Dorsolateral prefrontal cortex (tissue), 120 donors: ENCODE measurements at regions of chr14 and their contacts with region 1.

Region 1: DNA sequence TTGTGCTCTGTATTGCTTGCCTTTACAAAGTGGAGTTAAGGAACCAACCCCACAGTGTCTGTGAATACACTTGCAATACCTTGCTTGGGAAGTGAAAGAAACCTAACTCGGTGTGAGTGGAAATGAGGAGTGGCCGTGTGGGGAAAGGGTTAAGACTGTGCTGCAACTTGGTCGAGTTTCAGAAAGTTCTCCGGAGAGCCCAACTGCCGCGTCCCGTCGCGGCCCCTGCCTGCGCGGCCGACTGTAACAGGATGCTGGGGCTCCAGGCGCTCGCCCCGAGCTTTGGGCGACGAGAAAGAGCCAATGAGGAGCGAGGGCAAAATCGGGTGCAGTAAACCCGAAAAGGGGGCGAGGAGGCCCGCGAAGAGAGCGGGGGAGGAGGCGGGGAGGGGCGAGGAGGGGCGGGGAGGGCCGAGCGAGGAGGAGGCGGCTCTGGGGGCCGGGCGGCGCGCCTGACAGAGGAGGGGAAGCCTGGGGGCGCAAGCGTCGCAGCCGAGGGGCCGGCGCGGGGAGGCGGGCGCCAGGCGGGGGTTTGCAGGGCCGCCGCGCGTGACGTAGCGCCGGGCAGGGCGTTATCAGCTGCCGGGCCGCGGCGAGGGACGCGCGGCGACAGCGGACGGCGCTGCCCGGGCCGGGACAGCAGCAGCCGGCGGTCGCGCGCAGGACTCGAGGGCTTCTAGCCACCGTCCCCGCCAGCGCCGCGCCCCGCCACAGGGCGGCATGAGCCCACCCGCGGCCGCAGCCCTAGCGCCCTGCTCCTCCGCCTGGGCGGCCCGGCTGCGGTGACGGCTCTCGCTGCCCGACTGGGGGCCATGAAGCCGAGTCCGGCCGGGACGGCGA is at the start of gene DACT1:
- DNase-seq: peak in 8 of 10 donors; percentile 40 to 74 (median 61)
- H3K4me3 ChIP-seq: peak within 1 kb of the TSS; percentile 57 to 98 (median 80)
- H3K27ac ChIP-seq: peak within 1 kb of the TSS; percentile 15 to 96 (median 87)
- H3K27me3 ChIP-seq: no peaks in the 10 kb centered on the region
- CTCF ChIP-seq: peak in 8 of 56 donors; percentile 5 to 35 (median 22)
- total RNA-seq, gene DACT1: 5.1 to 16.0 (median 9.1) TPM

Region 2: GRCh38 chr14:58244556-58245387 is 392.8 kb before region 1 on chr14 and contains the start of gene PSMA3:
- intact Hi-C with region 1: loop called in 1 of 2 experiments (anchors 5 kb)
- DNase-seq: peak; percentile 92 to 98 (median 96)
- H3K4me3 ChIP-seq: peak within 1 kb of the TSS; percentile 63 to 99 (median 90)
- H3K27ac ChIP-seq: peak within 1 kb of the TSS; percentile 74 to 98 (median 93)
- H3K27me3 ChIP-seq: no peaks in the 10 kb centered on the region
- CTCF ChIP-seq: peak in 44 of 56 donors; percentile 5 to 64 (median 35)
- total RNA-seq, gene PSMA3: 45.6 to 146 (median 80.0) TPM

Region 3: DNA sequence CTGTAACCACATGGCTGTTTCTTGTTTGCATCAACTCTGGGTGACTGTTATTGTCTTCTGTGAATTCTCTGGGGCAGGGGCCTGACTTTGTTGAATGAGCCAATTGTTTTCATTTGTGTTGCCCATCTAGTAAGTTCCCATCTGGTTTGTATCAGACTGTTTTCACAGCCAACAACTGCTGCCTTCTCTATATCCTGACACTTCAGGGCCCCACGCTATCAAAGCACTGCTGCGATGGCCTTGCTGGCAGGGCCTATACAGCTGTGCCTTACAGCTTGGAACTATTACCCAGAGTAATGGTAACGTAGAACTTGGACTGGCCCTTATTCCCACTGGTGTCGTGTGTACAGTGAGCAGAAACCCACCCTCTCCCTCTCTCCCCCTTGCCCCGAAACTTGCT is 104.2 kb before region 1 on chr14:
- intact Hi-C with region 1: loop called in 1 of 2 experiments (anchors 2 kb)
- DNase-seq: peak in 8 of 10 donors; percentile 11 to 73 (median 58)
- H3K4me3 ChIP-seq: peak overlapping the region in 6 of 59 donors; percentile 1 to 38 (median 12)
- H3K27ac ChIP-seq: peak overlapping the region in 56 of 59 donors; percentile 3 to 87 (median 70)
- H3K27me3 ChIP-seq: no peaks in the 10 kb centered on the region
- CTCF ChIP-seq: peak in 4 of 56 donors; percentile 11 to 30 (median 24)

Region 4: GRCh38 chr14:58587271-58587670 is 50.3 kb before region 1 on chr14:
- intact Hi-C with region 1: no loop called
- DNase-seq: no peak
- H3K4me3 ChIP-seq: no peak overlapping the region
- H3K27ac ChIP-seq: no peak overlapping the region
- H3K27me3 ChIP-seq: no peaks in the 10 kb centered on the region
- CTCF ChIP-seq: no peak

Region 5: GRCh38 chr14:58738189-58738836 is 100.7 kb after region 1 on chr14:
- intact Hi-C with region 1: no loop called
- DNase-seq: no peak
- H3K4me3 ChIP-seq: no peak overlapping the region
- H3K27ac ChIP-seq: no peak overlapping the region
- H3K27me3 ChIP-seq: peaks cover 0 to 3% (median 0%) of the 10 kb centered on the region in 45 donors
- CTCF ChIP-seq: no peak

Region 6: GRCh38 chr14:58826845-58827686 is 189.5 kb after region 1 on chr14:
- intact Hi-C with region 1: loop called in 1 of 2 experiments (anchors 2 kb)
- DNase-seq: no peak
- H3K4me3 ChIP-seq: no peak overlapping the region
- H3K27ac ChIP-seq: no peak overlapping the region
- H3K27me3 ChIP-seq: no peaks in the 10 kb centered on the region
- CTCF ChIP-seq: peak in 33 of 56 donors; percentile 3 to 52 (median 24)

Region 7: DNA sequence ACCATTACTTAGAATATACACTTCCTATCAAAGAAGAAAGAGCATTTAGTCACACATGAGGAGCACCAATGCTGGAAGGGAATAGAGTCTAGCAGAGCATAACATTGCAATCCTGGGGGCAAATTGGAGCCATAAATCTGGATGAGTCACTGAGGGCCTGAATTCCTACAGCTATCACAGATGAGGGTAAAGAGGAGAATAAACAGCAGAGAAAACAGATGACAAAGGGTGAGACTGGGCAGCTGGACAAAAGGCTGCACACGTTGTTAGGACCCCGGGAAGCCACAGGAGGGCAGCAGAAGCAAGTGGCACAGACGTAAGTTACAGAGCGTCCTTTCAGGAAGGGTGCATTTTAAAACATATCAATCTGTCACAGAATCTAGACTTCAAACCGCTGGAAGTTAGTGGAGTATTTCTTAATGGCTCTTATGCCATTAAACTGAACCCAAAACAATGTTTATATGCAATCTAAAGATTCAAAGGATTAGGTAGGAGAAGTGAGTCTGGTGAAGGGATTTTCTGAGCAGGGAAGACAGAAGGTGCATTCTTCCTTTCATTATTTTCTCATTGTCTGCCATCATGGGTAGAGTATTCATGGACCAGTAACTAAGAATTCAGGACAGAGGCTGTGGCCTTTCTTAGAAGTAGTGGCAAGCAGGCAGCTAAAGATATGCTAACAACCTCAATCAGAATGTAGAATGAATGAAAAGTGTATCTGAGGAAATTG is 391.0 kb after region 1 on chr14:
- intact Hi-C with region 1: loop called (anchors 10 kb)
- DNase-seq: peak in 9 of 10 donors; percentile 30 to 70 (median 45)
- H3K4me3 ChIP-seq: peak overlapping the region in 1 of 59 donors; percentile 24
- H3K27ac ChIP-seq: no peak overlapping the region
- H3K27me3 ChIP-seq: no peaks in the 10 kb centered on the region
- CTCF ChIP-seq: peak in 55 of 56 donors; percentile 26 to 84 (median 66)